ENCODE measurements at regions of chr9 and their contacts with region 1.

Region 1: DNA sequence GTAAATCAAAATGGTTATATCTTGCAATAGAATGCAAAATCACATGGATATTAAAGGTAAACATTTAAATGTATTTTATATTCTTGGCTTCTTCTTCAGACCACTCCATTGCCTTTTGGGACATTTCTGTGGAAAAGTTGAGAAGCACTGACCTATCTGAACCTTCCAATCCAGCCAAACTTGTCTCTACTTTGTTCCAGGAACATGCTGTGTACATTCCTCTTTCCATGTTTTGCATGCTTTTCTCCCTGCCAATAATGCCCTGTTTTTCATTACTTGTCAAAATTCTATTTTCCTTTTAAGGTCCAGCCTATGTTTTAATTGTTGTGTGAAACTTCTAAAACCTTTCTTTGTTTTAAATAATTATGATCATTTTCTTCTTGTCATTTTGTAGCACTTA is 28.3 kb downstream of the JAK2 start:
- DNase-seq: no peak
- H3K4me3 ChIP-seq: no peak overlapping the region
- H3K27ac ChIP-seq: no peak overlapping the region
- H3K4me1 ChIP-seq: no peaks in the 10 kb centered on the region
- H3K27me3 ChIP-seq: no peaks in the 10 kb centered on the region
- CTCF ChIP-seq: no peak
- POLR2A ChIP-seq: no peak

Region 2: DNA sequence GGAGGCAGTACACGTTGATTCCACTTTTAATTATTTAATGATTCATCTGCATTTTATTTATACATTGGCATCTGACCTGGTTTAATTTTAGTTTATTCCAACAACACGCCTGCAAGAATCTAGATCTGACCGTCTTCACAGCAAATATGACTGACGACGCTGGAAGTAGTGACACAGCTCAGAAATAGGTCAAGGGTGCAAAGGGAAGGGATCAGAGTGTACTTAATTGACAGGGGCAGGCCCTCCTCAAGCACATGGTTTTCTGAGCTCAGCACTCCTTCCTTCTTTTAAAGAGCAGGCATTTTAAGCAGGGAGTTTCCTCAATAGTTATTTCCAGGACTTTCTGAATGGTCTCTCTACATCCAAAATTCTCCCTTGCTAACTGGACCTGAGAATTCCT is 838.6 kb before region 1 on chr9:
- intact Hi-C with region 1: loop called (anchors 10 kb)
- DNase-seq: no peak
- H3K4me3 ChIP-seq: no peak overlapping the region
- H3K27ac ChIP-seq: no peak overlapping the region
- H3K4me1 ChIP-seq: no peaks in the 10 kb centered on the region
- H3K27me3 ChIP-seq: no peaks in the 10 kb centered on the region
- CTCF ChIP-seq: no peak
- POLR2A ChIP-seq: no peak

Region 3: GRCh38 chr9:4832786-4833579 is 180.4 kb before region 1 on chr9:
- intact Hi-C with region 1: no loop called
- DNase-seq: no peak
- H3K4me3 ChIP-seq: no peak overlapping the region
- H3K27ac ChIP-seq: no peak overlapping the region
- H3K4me1 ChIP-seq: peaks cover 0 to 4% of the 10 kb centered on the region in 2 donors
- H3K27me3 ChIP-seq: no peaks in the 10 kb centered on the region
- CTCF ChIP-seq: no peak
- POLR2A ChIP-seq: no peak

Measured in breast epithelium (tissue), 4 donors.